K562 (cell line): ENCODE measurements at regions of chrX and their contacts with region 1.

Region 1: GRCh38 chrX:2463973-2464676 is 36.7 kb downstream of the DHRSX start:
- DNase-seq: peak; percentile 50 to 93 (median 60)
- ATAC-seq: peak; percentile 80
- H3K4me3 ChIP-seq: peak overlapping the region; percentile 10
- H3K27ac ChIP-seq: peak overlapping the region; percentile 73
- H3K4me1 ChIP-seq: no peaks in the 10 kb centered on the region; a peak in 2 of 5 replicates
- H3K27me3 ChIP-seq: no peaks in the 10 kb centered on the region
- CTCF ChIP-seq: no peak
- EP300 ChIP-seq: no peak
- POLR2A ChIP-seq: no peak
- RAD21 ChIP-seq: peak in 1 of 2 experiments; percentile 45; a peak in 2 of 4 replicates

Region 2: DNA sequence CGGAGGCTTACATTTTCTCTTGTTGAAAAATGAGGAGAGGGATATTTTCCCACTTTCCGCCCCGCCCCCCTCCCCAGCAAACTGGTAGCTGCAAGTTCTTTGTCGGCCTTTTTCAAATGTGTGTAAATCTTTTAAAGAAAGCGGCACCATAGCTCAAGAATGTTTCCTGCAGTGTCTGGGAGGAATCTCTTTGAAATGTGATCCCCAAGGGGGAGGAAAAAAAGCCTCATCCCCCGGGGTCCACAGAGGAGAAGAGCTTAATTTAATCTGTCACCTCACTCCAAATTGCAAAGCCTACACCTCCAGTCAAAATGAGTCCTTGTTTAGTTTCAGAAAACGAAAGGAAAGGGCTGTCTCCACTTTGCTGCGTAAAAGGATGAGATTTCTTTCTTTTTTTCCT is 814.5 kb before region 1 on chrX:
- CTCF ChIA-PET with region 1: no interaction called
- POLR2A ChIA-PET with region 1: no interaction called
- in situ Hi-C with region 1: no loop called
- intact Hi-C with region 1: loop called (anchors 5 kb)
- DNase-seq: no peak
- ATAC-seq: no peak
- H3K4me3 ChIP-seq: no peak overlapping the region
- H3K27ac ChIP-seq: no peak overlapping the region
- H3K4me1 ChIP-seq: no peaks in the 10 kb centered on the region
- H3K27me3 ChIP-seq: no peaks in the 10 kb centered on the region
- CTCF ChIP-seq: no peak
- EP300 ChIP-seq: no peak
- POLR2A ChIP-seq: no peak
- RAD21 ChIP-seq: no peak

Region 3: DNA sequence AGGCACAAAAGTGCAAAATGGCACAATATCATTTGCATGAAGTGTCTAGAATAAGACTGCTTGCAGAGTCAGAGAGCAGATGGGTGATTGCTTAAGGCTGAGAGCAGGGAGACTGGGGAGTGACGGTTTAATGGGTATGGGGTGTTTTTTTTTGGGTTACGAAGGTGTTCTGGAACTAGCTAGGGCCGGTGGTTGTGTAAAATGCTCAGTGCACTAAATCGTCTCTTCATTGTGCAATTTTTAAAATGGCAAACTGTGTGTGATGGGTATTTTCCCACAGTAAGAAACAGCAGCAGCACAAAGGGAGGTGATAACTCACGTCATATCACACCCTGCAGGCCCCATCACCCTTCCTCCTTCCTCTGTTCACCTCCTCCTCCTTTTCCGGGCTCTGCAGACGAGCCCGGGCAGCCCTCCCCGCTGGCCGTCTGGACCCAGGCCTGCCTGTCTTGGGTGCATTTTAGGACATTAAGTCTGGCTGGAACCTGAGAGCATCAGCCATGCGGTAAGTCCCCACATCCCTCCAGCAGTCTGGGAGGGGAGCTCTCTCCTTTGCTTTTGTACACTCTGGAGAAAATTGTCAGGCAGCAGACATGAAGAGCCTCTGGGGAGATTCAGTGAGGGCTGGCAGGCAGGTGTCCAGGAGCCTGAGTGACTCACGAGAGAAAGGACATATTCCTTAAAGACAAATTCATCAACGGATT is 806.6 kb before region 1 on chrX:
- CTCF ChIA-PET with region 1: no interaction called
- POLR2A ChIA-PET with region 1: no interaction called
- in situ Hi-C with region 1: loop called (anchors 10 kb)
- intact Hi-C with region 1: loop called (anchors 5 kb)
- DNase-seq: no peak
- ATAC-seq: no peak
- H3K4me3 ChIP-seq: no peak overlapping the region
- H3K27ac ChIP-seq: no peak overlapping the region
- H3K4me1 ChIP-seq: no peaks in the 10 kb centered on the region; a peak in 1 of 5 replicates
- H3K27me3 ChIP-seq: peaks cover 0 to 8% of the 10 kb centered on the region in 2 experiments; a peak in 1 of 5 replicates
- CTCF ChIP-seq: no peak
- EP300 ChIP-seq: no peak
- POLR2A ChIP-seq: no peak
- RAD21 ChIP-seq: no peak

Region 4: DNA sequence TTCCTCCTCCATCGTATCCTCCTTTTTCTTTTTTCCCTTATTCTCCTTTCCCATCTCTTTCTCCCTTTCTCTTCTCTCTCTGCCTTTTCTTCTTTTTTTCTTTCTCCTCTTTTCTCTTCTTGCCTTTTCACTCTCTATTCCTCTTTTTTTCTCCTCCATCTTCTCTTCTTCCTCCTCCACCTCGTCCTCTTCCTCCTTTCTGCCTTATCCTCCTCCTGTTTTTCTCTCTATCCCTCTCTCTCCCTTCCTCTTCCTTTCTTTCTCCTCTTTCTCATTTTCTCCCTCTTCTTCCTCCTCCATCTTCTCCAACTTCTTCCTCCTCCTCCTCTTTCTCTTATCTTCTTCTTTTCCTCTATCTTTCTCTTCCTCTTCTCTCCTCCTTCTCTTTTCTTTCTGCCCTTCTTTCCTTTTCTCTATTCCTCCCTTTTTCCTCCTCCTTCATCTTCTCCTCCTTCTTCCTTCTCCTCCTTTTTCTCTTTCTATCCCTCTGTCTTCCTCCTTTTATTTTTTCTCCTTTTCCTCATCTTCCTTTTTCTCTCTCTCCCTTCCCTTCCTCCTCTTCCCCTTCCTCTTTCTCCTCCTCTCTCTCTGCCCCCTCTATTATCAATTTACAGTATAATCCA is 232.4 kb before region 1 on chrX:
- CTCF ChIA-PET with region 1: no interaction called
- POLR2A ChIA-PET with region 1: no interaction called
- in situ Hi-C with region 1: no loop called
- intact Hi-C with region 1: loop called (anchors 5 kb)
- DNase-seq: no peak
- ATAC-seq: no peak
- H3K4me3 ChIP-seq: no peak overlapping the region
- H3K27ac ChIP-seq: no peak overlapping the region
- H3K4me1 ChIP-seq: no peaks in the 10 kb centered on the region; a peak in 3 of 5 replicates
- H3K27me3 ChIP-seq: no peaks in the 10 kb centered on the region
- CTCF ChIP-seq: no peak
- EP300 ChIP-seq: no peak
- POLR2A ChIP-seq: no peak
- RAD21 ChIP-seq: no peak

Region 5: DNA sequence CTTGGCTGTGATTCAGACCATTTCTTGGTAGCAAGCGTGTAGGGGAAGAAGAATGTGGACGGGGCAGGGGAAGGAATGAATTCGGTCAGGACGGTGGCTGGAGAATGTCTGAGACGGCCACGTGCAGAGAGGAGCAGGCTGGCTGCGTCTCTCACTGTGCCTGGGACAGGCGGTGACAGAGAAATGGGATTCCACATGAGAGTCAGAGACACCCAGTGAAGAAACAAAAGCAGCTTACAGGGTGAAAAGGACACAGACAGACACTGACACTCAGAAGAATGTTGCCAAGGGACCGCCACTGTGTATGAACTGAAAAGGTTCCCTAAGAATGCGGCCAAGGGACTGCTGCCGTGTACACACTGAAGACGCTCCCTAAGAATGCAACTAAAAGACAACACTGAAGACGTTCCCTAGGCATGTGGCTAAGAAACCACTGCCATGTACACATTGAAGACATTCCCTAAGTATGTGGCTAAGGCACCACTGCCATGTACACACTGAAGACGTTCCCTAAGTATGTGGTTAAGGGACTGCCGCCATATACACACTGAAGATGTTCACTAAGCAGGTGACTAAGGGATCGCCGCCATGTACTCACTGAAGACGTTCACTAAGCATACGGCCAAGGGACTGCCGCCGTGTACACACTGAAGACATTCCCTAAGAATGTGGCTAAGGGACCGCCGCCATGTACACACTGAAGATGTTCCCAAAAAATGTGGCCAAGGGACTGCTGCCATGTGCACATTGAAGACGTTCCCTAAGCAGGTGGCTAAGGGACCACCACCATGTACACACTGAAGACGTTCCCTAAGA is 12.4 kb before region 1 on chrX:
- CTCF ChIA-PET with region 1: no interaction called
- POLR2A ChIA-PET with region 1: no interaction called
- in situ Hi-C with region 1: no loop called
- intact Hi-C with region 1: loop called (anchors 1 kb)
- DNase-seq: peak; percentile 20 to 85 (median 35)
- ATAC-seq: peak; percentile 85
- H3K4me3 ChIP-seq: peak overlapping the region; percentile 23
- H3K27ac ChIP-seq: peak overlapping the region; percentile 92
- H3K4me1 ChIP-seq: no peaks in the 10 kb centered on the region; a peak in 3 of 5 replicates
- H3K27me3 ChIP-seq: no peaks in the 10 kb centered on the region
- CTCF ChIP-seq: no peak
- EP300 ChIP-seq: no peak
- POLR2A ChIP-seq: no peak
- RAD21 ChIP-seq: peak in 1 of 2 experiments; percentile 41; a peak in 2 of 4 replicates

Region 6: DNA sequence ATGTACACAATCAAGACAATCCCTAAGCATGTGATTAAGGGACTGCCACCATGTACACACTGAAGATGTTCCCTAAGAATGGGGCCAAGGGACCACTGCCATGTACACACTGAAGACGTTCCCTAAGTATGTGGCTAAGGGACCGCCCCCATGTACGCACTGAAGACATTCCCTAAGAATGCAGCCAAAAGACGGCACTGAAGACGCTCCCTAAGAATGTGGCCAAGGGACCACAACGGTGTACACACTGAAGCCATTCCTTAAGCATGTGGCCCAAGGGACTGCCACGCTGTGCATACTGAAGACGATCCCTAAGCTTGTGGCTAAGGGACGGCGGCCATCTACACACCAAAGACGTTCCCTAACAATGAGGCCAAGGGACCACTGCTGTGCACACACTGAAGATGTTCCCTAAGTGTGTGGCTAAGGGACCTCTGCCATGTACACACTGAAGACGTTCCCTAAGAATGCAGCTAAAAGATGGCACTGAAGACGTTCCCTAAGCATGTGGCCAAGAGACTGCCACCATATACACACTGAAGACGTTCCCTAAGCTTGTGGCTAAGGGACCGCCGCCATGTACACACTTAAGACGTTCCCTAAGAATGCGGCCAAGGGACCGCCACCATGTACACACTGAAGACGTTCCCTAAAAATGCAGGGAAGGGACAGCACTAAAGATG is 10.3 kb after region 1 on chrX:
- CTCF ChIA-PET with region 1: no interaction called
- POLR2A ChIA-PET with region 1: no interaction called
- in situ Hi-C with region 1: no loop called
- intact Hi-C with region 1: loop called (anchors 1 kb)
- DNase-seq: peak in 3 of 4 experiments; percentile 20 to 85 (median 32)
- ATAC-seq: peak; percentile 79
- H3K4me3 ChIP-seq: peak overlapping the region; percentile 21
- H3K27ac ChIP-seq: peak overlapping the region; percentile 84
- H3K4me1 ChIP-seq: peaks cover 0 to 13% of the 10 kb centered on the region in 2 experiments; a peak in 3 of 5 replicates
- H3K27me3 ChIP-seq: no peaks in the 10 kb centered on the region
- CTCF ChIP-seq: no peak
- EP300 ChIP-seq: no peak
- POLR2A ChIP-seq: no peak
- RAD21 ChIP-seq: no peak

Region 7: DNA sequence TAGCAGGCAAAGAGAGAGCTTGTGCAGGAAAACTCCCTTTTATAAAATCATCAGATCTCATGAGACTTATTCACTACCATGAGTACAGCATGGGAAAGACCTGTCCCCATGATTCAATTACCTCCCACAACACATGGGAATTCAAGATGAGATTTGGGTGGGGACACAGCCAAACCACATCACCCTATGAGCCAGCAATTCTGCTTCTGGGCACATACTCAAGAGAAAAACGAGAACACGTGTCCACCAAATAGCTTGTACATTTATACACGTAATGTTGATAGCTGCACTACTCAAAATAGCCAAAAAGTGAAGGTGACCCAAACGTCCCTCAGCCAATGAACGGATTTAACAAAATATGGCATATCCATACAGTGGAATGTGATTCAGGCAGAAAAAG is 131.1 kb after region 1 on chrX:
- CTCF ChIA-PET with region 1: no interaction called
- POLR2A ChIA-PET with region 1: no interaction called
- in situ Hi-C with region 1: no loop called
- intact Hi-C with region 1: loop called (anchors 2 kb)
- DNase-seq: no peak
- ATAC-seq: no peak
- H3K4me3 ChIP-seq: no peak overlapping the region
- H3K27ac ChIP-seq: no peak overlapping the region
- H3K4me1 ChIP-seq: no peaks in the 10 kb centered on the region
- H3K27me3 ChIP-seq: no peaks in the 10 kb centered on the region
- CTCF ChIP-seq: no peak
- EP300 ChIP-seq: no peak
- POLR2A ChIP-seq: no peak
- RAD21 ChIP-seq: no peak